HAP-1 (cell line): ENCODE measurements at regions of chr4 and their contacts with region 1.

Region 1: GRCh38 chr4:26459054-26459755 is 31.1 kb downstream of the CCKAR start:
- DNase-seq: peak; percentile 16 to 68
- H3K4me3 ChIP-seq: no peak overlapping the region
- H3K4me1 ChIP-seq: no peaks in the 10 kb centered on the region
- H3K27me3 ChIP-seq: no peaks in the 10 kb centered on the region

Region 2: DNA sequence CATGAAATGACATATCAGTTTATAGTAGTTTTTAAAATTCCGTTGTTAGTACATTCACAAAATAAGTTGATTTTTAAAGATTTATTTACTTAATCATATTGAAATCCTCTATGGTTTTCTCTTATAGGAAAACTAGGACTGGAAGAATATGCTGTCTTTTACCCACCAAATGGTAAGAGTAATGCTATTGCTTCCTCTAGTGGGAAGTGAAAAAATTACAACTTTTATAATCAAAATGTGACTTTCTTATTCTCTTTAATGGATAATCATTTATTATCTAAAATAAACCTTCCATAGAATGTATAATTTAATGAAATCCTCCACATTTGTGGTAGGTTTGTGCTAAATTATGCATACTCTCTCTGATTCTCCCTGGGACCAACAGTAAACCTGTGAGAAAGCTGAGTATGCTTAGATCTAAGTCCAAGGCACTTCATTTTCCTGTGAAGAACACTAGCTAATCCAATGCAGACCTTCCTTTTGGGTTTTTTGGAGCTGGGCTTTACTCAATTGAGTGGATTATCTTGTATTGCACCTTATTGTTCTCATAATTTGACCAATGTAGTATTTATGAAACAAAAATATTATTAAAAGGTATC is 260.8 kb after region 1 on chr4:
- in situ Hi-C with region 1: loop called (anchors 10 kb)
- DNase-seq: peak in 1 of 2 experiments; percentile 60
- H3K4me3 ChIP-seq: no peak overlapping the region
- H3K4me1 ChIP-seq: no peaks in the 10 kb centered on the region
- H3K27me3 ChIP-seq: no peaks in the 10 kb centered on the region

Region 3: DNA sequence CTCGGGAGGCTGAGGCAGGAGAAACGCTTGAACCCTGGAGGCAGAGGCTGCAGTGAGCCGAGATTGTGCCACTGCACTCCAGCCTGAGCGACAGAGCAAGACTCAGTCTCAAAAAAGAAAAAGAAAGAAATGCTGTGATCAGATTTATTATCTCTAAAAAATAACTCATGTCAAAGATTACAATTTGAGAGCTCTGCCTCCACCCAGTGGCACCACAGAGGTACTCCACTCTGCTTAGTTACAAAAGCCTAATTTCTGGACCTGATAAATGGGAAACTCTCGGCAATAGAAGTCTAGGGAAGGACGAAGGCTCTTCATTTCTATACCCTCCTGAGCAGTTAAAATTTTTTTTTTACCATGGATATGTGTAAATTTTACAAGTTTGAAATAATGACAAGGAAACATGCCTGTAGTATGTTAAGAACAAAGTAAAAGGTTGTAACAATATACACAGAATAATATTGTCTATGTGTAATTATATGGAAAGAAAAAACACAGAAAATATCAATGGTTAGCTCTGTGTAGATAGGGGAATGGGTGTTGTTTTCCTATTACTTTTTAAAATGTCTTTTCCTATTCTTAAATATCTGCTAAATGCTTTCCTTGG is 551.2 kb after region 1 on chr4:
- in situ Hi-C with region 1: loop called (anchors 25 kb)
- DNase-seq: peak; percentile 68 to 73
- H3K4me3 ChIP-seq: no peak overlapping the region
- H3K4me1 ChIP-seq: peaks cover 8% of the 10 kb centered on the region
- H3K27me3 ChIP-seq: no peaks in the 10 kb centered on the region

Region 4: DNA sequence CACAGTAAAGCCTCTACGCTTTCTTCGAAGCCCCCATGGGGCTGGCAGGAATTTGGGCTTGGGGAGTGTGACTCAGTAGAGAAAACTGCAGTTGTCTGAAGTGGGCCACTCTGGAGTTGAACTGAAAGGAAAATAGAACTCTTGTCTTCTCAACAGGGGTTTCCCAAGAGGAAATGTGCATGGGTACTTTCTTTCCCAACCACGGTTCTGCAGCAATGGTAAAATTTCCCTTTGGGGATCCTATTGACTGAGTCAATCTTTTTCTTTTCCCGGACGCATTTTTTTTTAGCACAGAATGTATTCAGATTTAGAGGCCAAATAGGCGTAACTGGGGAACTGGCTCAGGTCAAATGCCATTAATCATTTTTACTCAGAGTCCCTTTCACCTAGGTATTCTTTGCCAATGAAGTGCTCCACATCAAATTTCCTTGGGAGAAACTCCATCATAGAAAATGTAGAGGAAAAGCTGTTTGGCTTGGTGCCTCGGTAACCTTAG is 670.7 kb after region 1 on chr4:
- in situ Hi-C with region 1: no loop called
- DNase-seq: no peak
- H3K4me3 ChIP-seq: no peak overlapping the region
- H3K4me1 ChIP-seq: peaks cover 9% of the 10 kb centered on the region
- H3K27me3 ChIP-seq: no peaks in the 10 kb centered on the region